ENCODE measurements at regions of chr5 and their contacts with region 1.

Region 1: GRCh38 chr5:157328277-157328912 is 62.5 kb downstream of the CYFIP2 start:
- DNase-seq: peak; percentile 80
- CTCF ChIP-seq: peak; percentile 93

Region 2: DNA sequence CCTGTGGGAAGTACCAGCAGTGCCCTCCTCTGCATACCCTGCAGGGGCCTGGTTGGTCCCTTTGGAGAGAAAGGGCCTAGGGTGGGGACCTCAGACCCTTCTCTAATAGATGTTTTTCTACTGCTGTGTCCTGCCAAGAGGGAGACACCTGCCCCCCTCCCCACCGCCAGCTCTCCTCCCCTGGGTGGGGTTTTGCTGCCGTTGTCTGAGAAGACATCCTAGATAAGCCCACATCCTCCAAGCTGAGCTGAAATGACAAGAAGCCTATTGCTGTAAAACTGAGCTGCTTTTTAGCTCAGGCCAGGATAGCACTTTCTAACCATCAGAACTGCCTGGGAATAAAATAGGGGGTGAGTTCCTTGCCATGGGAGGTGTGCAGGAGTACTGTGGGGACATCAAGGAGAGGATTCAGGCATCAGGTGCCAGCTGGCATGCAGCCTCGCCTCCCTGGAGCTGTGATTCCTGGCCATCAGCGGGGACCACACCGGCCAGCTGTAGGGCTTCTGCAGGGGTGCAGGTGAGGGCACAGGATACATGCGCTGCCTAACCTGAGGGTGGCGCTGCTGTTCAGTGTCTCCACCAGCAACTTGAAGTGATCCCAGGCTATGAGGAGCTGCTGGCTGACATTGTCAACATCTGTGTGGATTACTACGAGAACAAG is 24.6 kb before region 1 on chr5:
- CTCF ChIA-PET with region 1: interaction called, 14 read pairs
- POLR2A ChIA-PET with region 1: no interaction called
- DNase-seq: no peak
- CTCF ChIP-seq: peak; percentile 24

Region 3: DNA sequence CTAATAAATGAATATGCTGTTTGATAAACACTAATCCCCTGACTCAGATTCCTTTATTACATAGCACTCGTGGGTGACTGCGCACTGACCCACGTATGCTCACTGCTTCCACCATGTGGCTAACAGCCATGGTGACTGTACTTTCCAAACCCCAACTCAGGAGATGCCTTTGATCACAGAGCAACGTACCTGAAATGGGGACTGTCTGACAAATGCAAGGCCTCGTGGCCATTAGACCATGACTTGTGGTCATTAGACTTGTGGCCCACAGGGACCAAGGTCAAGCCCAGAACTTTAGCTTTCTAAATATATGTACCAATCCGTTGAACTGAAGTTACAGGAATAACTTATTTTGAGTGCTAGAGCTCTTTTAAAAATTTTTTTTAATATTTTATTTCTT is 15.9 kb before region 1 on chr5:
- CTCF ChIA-PET with region 1: interaction called, 25 read pairs
- POLR2A ChIA-PET with region 1: no interaction called
- DNase-seq: peak; percentile 84
- CTCF ChIP-seq: peak; percentile 83

Region 4: DNA sequence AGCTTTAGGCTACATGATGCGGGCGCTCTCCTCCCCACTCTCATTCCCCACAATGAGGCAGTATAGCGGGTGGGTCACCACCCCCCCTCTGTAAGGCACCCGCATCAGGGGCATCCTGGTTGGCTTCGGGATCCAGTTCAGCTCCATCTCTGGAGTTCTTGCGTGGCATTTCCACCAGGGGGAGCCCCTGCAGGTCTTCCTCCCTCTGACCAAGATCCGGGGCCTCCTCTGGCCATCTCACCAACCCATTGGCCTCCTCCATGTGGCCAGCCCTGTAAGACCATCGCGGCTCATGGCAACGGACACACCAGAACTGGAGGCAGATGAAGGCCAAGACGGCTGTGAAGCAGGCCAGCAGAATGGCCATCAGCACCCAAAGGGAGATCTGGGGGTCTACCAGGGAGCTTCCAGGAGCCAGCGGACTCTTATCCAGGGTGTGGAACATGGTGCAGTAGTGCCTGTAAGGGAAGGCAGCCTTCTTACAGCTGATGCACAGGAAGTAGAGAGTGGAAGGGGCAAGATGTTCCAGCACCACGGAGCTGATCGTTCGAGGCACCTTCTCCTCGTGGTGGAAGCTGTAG is 14.5 kb after region 1 on chr5:
- CTCF ChIA-PET with region 1: interaction called, 168 read pairs
- POLR2A ChIA-PET with region 1: no interaction called
- DNase-seq: peak; percentile 53
- CTCF ChIP-seq: peak; percentile 59

Region 5: GRCh38 chr5:157354800-157355199 is 26.4 kb after region 1 on chr5:
- CTCF ChIA-PET with region 1: interaction called, 39 read pairs
- POLR2A ChIA-PET with region 1: no interaction called
- DNase-seq: no peak
- CTCF ChIP-seq: peak; percentile 24

Region 6: DNA sequence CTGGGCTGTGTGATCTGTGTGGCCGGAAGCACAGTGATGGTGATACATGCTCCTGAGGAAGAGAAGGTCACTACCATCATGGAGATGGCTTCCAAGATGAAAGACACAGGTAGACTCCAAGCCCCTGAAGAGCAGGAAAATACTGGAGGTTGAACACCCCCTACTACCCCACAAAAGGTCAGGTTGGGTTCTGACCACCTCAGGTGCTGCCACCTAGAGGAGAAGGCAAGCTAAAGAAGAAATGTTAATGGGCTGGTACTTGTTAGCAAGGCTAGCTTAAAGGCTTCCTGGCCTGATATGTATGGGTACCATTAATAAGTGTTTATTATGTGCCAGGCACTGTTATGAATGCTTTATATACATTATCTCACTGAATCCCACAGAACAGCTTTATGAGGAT is 143.3 kb after region 1 on chr5:
- CTCF ChIA-PET with region 1: interaction called, 14 read pairs
- POLR2A ChIA-PET with region 1: no interaction called
- DNase-seq: peak; percentile 54
- CTCF ChIP-seq: peak; percentile 67

Region 7: GRCh38 chr5:157718519-157718918 is 390.1 kb after region 1 on chr5:
- CTCF ChIA-PET with region 1: interaction called, 11 read pairs
- POLR2A ChIA-PET with region 1: no interaction called
- DNase-seq: peak; percentile 52
- CTCF ChIP-seq: peak; percentile 59

Measured in GM10248 (cell line).